ENCODE measurements at regions of chr15 and their contacts with region 1.

Region 1: DNA sequence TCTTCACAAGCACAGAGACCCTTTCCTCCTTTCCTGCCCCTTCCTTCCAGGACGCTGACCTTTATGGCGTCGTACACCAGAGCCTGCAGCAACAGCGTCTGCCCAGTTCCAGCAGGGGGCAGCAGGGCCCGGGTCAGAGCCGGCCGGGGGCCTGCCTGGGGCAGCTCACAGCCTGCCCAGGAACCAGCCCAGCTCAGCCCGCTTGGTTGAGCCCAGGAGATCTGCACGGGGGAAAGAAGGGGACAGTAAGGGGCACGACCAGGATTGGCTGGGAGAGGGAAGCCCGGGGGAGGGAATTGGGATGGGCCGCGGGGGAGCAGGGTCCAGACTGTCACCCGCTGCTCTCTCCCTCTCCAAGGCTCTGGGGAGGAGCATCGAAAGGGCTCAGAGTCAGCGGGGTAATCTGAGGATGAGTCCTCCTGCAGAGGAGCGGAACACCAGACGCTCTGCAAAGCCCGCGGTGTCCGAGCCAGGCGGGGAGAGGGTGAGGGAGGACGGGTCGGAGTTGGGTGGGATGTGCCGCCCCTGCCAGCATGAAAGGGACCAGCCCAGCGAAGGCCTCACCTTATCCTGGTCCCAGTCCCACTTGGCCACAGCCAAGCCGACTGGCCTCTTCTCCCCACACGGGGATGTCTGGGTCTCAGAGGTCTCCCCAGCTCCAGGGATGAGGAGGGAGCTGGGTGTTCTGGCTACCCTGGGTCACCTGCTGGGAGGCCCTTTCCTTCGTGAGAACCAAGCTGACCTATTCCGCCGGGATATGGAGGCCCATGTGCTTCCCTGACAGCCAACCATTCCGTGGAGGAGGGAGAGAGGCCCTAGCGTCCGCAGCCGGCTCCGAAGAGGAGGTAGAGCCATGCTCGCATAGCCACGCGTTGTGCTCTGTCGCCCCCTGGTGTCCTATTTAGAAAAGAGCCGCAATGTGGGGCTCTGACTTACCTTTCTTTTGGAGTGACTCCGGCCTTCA is 7.4 kb upstream of the IGDCC3 start:
- DNase-seq: peak; percentile 91
- ATAC-seq: peak; percentile 97

Region 2: GRCh38 chr15:65177901-65178300 is 207.3 kb before region 1 on chr15:
- intact Hi-C with region 1: no loop called
- DNase-seq: no peak
- ATAC-seq: no peak

Region 3: DNA sequence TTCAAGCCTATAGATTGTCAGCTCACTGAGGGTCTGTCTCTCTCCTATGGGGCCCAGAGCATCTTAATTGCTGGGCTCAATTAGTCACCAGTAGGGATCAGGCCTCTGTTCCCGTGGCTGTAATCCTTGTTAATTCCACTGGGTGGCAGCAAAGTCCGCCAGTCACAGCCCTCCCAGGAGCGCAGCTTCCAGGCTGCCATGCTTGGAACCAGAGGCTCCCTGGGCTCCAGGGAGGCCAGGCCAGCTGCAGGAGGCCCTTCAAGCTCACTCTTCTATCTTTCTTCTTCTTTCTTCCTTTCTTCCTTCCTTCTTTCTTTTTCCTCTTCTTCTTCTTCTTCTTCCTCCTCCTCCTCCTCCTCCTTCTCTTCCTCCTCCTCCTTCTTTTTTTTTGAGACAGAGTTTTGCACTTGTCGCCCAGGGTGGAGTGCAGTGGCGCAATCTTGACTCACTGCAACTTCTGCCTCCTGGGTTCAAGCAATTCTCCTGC is 66.3 kb before region 1 on chr15:
- intact Hi-C with region 1: loop called (anchors 1 kb)
- DNase-seq: peak; percentile 82
- ATAC-seq: peak; percentile 91

Region 4: GRCh38 chr15:65336493-65337455 is 48.4 kb before region 1 on chr15:
- intact Hi-C with region 1: no loop called
- DNase-seq: no peak
- ATAC-seq: no peak